Aorta (tissue), 5 donors: ENCODE measurements at regions of chr5 and their contacts with region 1.

Region 1: GRCh38 chr5:107483231-107484024 is 187.3 kb downstream of the EFNA5 start:
- DNase-seq: no peak
- ATAC-seq: no peak
- H3K4me3 ChIP-seq: no peak overlapping the region
- H3K27ac ChIP-seq: no peak overlapping the region
- H3K4me1 ChIP-seq: peaks cover 0 to 5% of the 10 kb centered on the region in 2 donors
- H3K27me3 ChIP-seq: no peaks in the 10 kb centered on the region

Region 2: GRCh38 chr5:107121793-107122519 is 361.5 kb before region 1 on chr5:
- intact Hi-C with region 1: no loop called
- DNase-seq: no peak
- ATAC-seq: no peak
- H3K4me3 ChIP-seq: no peak overlapping the region
- H3K27ac ChIP-seq: no peak overlapping the region
- H3K4me1 ChIP-seq: no peaks in the 10 kb centered on the region
- H3K27me3 ChIP-seq: no peaks in the 10 kb centered on the region

Region 3: GRCh38 chr5:107519900-107520354 is 36.5 kb after region 1 on chr5:
- intact Hi-C with region 1: loop called in 1 of 2 experiments (anchors 5 kb)
- DNase-seq: no peak
- ATAC-seq: no peak
- H3K4me3 ChIP-seq: no peak overlapping the region
- H3K27ac ChIP-seq: no peak overlapping the region
- H3K4me1 ChIP-seq: no peaks in the 10 kb centered on the region
- H3K27me3 ChIP-seq: no peaks in the 10 kb centered on the region